Calu3 (cell line): ENCODE measurements at regions of chr2 and their contacts with region 1.

Region 1: DNA sequence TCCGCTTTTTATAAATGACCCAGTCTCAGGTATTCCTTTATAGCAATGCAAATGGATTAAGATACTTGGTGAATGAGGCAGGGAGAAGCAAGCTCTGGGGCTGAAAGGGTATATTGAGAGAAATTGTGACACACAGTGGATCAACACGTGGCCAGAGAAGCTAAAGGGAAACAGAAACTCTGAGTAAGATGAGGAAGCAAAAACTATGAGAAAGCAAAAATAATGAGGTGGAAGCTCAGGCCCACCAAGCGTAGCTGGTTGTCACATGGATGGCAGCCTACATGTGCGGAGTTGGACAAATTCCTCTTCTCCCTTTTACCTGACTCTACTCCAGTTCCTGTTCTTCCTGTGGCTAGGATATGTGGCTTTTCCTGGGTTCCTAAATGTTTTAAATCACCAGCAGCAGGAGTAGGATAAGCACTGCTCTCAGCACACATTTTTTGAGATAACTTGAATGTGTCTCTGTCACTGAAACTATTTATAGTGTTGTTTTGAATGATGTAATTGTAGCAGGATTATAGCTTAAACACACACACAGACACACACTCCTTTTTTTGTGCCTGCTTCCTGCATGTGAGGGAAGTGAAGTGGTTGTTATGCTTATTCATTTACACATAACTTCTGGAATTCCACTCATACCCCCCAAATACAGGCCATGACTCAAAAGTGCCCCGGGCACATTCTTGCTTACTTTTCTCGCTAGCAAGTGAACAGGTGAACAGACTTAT is 30.1 kb upstream of the EPC2 start:
- DNase-seq: peak; percentile 68
- H3K4me3 Mint-ChIP-seq: peak overlapping the region; percentile 9
- H3K27ac Mint-ChIP-seq: peak overlapping the region; percentile 66
- H3K4me1 Mint-ChIP-seq: peaks cover 23% of the 10 kb centered on the region
- H3K27me3 Mint-ChIP-seq: no peaks in the 10 kb centered on the region
- CTCF ChIP-seq: no peak

Region 2: GRCh38 chr2:148644883-148645538 is 30.5 kb after region 1 on chr2:
- CTCF ChIA-PET with region 1: interaction called, 15 read pairs
- intact Hi-C with region 1: no loop called
- DNase-seq: peak; percentile 88
- H3K4me3 Mint-ChIP-seq: peak overlapping the region; percentile 75
- H3K27ac Mint-ChIP-seq: peak overlapping the region; percentile 55
- H3K4me1 Mint-ChIP-seq: peaks cover 24% of the 10 kb centered on the region
- H3K27me3 Mint-ChIP-seq: no peaks in the 10 kb centered on the region
- CTCF ChIP-seq: no peak